ENCODE measurements at regions of chr1 and their contacts with region 1.

Region 1: DNA sequence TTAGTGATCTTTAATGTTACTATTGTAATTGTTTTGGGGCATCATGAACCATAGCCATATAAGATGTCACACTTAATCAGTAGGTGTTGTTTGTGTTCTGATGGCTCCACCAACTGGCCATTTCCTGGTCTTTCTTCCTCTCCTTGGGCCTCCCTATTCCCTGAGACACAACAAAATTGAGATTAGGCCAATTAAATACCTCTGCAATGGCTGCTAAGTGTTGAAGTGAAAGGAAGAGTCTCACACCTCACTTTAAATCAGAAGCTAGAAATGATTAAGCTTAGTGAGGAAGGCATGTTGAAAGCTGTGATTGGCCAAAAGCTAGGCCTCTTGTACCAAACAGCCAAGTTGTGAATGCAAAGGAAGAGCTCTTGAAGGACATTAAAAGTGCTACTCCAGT is 30.7 kb downstream of the PPP2R5A start:
- DNase-seq: no peak
- ATAC-seq: peak in 3 of 4 donors; percentile 40 to 78 (median 68)
- H3K4me3 ChIP-seq: no peak overlapping the region
- H3K27ac ChIP-seq: no peak overlapping the region
- H3K4me1 ChIP-seq: peaks cover 3 to 15% (median 10%) of the 10 kb centered on the region in 3 donors
- H3K27me3 ChIP-seq: no peaks in the 10 kb centered on the region
- CTCF ChIP-seq: no peak

Region 2: DNA sequence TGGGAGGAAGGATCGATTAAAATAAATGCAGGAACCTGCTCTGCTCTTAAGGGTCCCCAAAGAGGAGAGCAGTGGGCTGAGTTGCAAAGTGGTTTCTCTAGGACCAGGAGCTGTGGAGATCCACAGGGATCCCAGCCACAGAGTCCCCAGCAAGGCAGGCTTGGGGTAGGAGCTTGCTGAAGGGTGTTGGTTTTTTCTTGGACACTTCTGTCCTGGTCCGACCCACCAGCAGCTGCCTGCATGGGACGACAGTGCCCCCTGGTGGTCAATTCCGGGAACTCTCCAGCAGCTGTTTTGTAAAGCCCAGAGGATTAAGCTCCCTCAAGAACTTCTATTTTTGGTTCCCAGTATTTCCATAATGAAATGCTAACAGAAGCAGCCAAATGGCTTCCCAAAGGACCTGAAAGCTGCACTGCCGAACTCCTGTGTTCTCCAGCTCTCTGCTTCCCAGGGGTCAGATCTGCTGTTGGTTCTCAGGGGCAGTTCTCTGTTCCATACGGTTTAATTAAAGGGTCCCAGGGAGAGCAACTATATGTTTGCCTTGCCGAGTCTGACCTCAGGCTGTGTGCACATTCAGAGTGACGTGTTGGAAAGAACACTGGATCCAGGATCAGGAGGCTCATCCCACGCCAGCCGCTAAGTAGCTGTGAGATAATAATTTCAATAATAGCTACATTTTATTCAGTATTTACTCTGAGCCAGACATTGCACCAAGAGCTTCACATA is 140.1 kb after region 1 on chr1:
- intact Hi-C with region 1: loop called in 1 of 3 experiments (anchors 10 kb)
- DNase-seq: peak; percentile 61 to 96 (median 88)
- ATAC-seq: peak; percentile 76 to 95 (median 92)
- H3K4me3 ChIP-seq: no peak overlapping the region
- H3K27ac ChIP-seq: no peak overlapping the region
- H3K4me1 ChIP-seq: no peaks in the 10 kb centered on the region
- H3K27me3 ChIP-seq: no peaks in the 10 kb centered on the region
- CTCF ChIP-seq: peak; percentile 95 to 97 (median 96)